ENCODE measurements at regions of chr15 and their contacts with region 1.

Region 1: GRCh38 chr15:41022487-41023090 is 69.3 kb downstream of the CHAC1 start:
- DNase-seq: peak; percentile 16
- H3K4me3 ChIP-seq: no peak overlapping the region
- CTCF ChIP-seq: peak; percentile 77

Region 2: DNA sequence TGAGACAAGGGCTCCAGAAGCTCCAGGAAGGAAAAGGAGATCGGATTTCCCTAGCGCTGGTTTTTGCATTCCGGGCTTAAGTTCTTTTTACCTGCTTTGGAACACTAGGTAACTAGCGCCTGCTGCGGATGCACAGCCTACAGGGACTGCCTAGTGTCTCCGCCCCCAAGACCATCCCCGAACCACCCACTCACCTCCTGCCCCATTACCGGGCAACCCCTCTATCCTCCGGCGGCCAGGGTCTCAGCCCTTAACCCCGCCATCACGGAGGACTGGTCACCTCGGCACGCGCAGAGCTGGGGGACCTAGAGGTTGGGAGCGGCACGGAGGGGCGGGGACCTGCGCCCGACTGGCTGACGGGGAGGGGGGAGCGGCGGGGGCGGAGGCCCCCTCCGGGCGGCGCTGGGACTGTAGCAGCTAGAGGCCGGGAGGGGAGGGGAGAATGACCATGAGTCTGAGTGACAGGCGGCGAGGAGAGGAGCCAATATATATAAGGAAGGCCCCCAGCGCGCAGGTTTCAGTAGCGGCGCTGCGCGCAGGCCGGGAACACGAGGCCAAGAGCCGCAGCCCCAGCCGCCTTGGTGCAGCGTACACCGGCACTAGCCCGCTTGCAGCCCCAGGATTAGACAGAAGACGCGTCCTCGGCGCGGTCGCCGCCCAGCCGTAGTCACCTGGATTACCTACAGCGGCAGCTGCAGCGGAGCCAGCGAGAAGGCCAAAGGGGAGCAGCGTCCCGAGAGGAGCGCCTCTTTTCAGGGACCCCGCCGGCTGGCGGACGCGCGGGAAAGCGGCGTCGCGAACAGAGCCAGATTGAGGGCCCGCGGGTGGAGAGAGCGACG is 93.5 kb before region 1 on chr15 and contains the start of gene DLL4:
- CTCF ChIA-PET with region 1: interaction called, 48 read pairs
- POLR2A ChIA-PET with region 1: no interaction called
- DNase-seq: no peak
- H3K4me3 ChIP-seq: peak within 1 kb of the TSS; percentile 48
- CTCF ChIP-seq: no peak

Region 3: DNA sequence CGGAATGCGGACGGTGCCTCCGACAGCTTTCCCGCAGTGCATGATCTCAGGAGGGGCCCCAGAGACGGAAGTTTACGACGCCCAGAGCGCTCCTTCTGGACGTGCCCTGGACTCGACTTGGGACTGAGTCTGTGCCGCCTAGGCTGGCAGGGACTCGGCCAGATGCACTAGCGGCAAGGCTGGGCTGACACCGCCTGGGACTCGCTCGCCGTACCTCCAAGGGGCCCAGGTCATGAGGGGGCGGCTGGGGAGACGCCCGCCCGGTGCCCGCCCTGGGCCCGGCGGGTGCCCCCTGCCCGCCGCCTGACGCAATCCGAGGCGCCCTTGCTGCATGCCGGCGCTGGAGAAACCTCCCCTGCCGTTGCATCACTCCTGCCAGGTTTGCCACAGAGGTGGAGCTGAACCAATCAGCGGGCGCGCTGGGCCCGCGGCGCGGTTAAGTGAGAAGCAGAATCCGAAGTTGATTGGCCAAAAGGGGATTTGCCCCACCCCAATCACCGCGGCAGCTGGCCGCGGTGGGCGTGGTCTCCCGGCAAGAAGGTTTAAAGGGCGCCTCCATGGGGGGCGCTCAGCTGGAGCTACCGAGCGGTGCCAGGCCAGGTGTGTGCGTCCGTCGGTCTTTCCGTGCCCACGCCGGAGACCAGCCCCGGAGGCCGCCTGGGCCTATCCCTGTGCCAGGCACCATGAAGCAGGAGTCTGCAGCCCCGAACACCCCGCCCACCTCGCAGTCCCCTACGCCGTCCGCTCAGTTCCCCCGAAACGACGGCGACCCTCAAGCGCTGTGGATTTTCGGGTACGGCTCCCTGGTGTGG is 69.5 kb before region 1 on chr15 and contains the start of gene CHAC1:
- CTCF ChIA-PET with region 1: interaction called, 17 read pairs
- POLR2A ChIA-PET with region 1: interaction called, 4 read pairs
- DNase-seq: peak; percentile 86
- H3K4me3 ChIP-seq: peak within 1 kb of the TSS; percentile 96
- CTCF ChIP-seq: no peak

Region 4: DNA sequence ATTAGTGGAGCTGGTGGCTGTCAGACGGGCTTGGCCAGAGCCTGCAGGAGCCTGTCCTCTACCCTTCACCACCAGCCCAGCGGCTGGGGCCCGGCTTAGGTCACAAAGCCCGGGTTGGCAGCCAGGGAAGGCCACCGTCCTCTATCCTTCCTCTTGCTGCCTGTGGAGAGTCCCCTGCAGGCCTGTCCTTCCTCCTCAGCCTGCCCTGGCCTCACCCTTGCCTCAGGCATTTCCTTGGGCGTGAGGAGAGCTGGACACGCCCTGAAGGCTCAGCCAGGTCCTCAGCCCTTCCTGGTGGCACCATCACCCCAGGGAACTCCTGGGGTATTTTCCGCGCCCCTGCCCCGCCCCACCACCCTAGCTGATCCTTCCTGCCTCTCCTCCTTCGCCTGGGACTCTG is 61.7 kb before region 1 on chr15:
- CTCF ChIA-PET with region 1: interaction called, 17 read pairs
- POLR2A ChIA-PET with region 1: interaction called, 4 read pairs
- DNase-seq: no peak
- H3K4me3 ChIP-seq: no peak overlapping the region
- CTCF ChIP-seq: no peak

Region 5: DNA sequence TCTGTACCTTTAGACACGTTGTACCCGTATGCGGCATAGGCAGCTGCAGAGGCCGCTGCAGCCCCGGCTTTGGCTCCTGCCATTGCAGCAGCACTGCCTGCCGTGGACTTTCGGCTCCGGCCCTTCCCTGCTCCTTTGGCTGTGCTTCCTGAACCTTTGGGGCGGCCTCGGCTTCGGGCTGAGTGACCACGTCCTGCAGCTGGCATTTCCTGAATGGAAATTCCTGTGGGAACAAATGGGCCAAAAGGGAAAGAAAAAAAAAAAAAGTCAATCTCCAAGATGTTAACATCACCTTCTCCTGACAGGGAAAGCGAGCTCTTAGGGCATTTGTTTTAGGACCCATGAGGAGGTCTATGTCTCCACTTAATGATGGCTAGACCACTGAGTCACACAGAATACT is 39.7 kb before region 1 on chr15:
- CTCF ChIA-PET with region 1: interaction called, 10 read pairs
- POLR2A ChIA-PET with region 1: no interaction called
- DNase-seq: peak; percentile 29
- H3K4me3 ChIP-seq: no peak overlapping the region
- CTCF ChIP-seq: no peak

Region 6: DNA sequence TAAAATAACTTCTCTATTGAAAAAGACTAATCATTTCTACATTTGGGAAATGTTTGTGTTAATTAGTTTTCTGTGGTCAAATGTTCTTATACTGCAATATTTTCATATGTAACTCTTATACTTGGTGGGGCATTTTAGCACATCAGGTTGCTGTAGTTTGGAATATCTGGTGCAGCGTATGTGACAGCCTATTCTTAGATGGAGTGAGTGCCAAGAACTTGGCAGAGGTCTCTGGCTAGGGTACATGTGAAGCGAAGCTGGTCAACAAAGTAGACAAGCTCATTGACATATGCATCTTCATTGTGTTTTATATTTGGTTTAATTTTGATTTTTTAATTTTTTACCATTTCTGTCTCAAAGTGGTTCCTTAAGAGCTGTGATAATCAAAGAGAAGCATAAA is 16.1 kb before region 1 on chr15:
- CTCF ChIA-PET with region 1: interaction called, 47 read pairs
- POLR2A ChIA-PET with region 1: no interaction called
- DNase-seq: no peak
- H3K4me3 ChIP-seq: no peak overlapping the region
- CTCF ChIP-seq: no peak

Region 7: GRCh38 chr15:41183581-41183980 is 161.0 kb after region 1 on chr15:
- CTCF ChIA-PET with region 1: interaction called, 51 read pairs
- POLR2A ChIA-PET with region 1: no interaction called
- DNase-seq: no peak
- H3K4me3 ChIP-seq: no peak overlapping the region
- CTCF ChIP-seq: no peak

Measured in AG04449 (cell line).